ENCODE measurements at regions of chr10 and their contacts with region 1.

Region 1: DNA sequence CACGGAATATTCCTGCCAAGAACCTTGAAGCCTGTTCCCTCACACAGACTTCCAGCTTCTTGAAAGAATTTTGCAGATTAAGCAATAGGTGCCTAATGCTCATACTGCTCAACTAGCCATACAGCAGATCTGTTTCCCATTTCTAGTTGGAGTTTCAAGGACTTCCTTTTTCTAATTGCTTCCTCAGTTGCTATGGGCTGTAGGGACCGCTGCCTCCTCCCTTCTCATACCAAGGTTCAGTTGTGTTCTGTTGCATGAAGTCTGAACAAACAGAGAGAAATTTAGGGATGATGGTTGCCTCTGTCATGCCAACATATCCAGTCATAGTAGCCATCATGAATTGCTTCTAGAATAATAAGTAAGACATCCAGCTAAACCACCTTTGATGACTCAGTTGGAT is 6.8 kb downstream of the ITGA8 start:
- DNase-seq: no peak
- H3K4me3 ChIP-seq: no peak overlapping the region
- H3K27me3 ChIP-seq: no peaks in the 10 kb centered on the region
- CTCF ChIP-seq: no peak

Region 2: DNA sequence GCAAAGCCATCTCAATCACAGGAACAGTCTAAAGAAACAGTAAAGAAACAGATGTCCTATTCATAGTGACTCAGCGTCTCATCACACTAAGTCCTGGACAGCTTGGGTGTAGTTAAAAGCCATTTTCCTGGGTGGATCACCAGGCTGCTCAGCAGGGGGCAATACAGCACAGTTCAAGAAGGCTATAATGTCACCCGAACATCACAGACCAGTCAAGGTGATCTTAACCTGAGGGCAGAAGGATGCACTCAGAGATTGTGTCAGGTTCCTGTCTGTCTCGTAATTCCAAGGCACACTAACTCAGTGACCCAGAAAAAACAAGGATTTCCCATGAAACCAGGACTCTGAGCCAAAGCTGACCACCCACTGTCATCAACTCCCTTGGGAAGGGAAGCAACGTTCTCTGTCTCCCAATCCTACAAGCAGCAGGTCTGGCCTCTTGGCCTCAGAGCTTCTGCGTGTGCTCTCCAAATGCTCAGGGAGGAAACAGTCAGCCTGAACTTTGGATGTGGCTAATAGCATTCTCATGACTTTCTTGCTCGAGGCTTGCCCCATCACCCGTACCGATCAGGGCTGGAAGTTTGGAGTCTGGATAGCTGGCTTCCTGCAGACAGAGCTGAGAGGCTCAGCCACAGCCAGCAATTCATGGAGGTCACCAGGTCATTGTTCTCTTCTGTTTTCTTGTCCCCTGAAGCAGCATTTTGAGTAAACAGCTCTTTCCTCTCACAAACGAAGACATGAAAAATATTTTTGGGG is 251.4 kb before region 1 on chr10:
- CTCF ChIA-PET with region 1: interaction called, 29 read pairs
- POLR2A ChIA-PET with region 1: no interaction called
- DNase-seq: peak; percentile 84
- H3K4me3 ChIP-seq: no peak overlapping the region
- H3K27me3 ChIP-seq: no peaks in the 10 kb centered on the region
- CTCF ChIP-seq: peak; percentile 59

Measured in BJ (cell line).